Psoas muscle (tissue), 8 donors: ENCODE measurements at regions of chr7 and their contacts with region 1.

Region 1: DNA sequence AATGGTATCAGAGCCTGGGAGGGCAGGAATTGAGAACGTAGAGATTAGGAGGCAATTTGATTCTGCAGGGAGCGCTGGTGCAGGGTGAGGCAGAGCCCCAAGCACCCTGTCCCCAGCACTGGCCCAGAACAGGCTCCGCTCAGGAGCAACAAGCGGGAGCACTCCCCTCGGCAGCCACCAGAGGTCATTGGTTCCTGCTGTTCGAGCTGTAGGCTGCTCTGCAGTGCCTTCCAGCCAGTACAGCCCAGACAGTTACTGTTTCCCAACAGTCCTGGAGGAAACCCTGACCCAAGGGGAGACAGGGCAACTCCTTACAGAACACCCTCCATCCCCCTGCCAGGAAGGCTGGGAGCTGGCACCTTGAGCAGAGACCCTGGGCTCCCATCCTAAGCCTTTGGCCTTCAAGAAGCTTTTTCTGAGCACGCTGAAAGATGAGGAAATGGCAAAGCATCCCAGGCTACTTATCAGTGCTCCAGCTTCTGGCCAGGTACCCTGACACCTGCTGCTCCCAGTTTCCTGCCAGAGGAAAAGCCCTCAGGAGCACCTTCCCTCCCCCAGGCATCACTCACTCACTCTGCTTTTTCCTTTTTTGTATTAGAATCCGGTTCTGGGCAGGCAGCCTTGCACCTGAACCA is 71.2 kb upstream of the EFCAB10 start:
- DNase-seq: peak; percentile 77 to 89
- ATAC-seq: peak; percentile 91 to 95 (median 93)
- H3K4me3 ChIP-seq: no peak overlapping the region
- H3K27ac ChIP-seq: no peak overlapping the region
- H3K4me1 ChIP-seq: peaks cover 28% of the 10 kb centered on the region
- H3K27me3 ChIP-seq: no peaks in the 10 kb centered on the region
- CTCF ChIP-seq: peak; percentile 91

Region 2: DNA sequence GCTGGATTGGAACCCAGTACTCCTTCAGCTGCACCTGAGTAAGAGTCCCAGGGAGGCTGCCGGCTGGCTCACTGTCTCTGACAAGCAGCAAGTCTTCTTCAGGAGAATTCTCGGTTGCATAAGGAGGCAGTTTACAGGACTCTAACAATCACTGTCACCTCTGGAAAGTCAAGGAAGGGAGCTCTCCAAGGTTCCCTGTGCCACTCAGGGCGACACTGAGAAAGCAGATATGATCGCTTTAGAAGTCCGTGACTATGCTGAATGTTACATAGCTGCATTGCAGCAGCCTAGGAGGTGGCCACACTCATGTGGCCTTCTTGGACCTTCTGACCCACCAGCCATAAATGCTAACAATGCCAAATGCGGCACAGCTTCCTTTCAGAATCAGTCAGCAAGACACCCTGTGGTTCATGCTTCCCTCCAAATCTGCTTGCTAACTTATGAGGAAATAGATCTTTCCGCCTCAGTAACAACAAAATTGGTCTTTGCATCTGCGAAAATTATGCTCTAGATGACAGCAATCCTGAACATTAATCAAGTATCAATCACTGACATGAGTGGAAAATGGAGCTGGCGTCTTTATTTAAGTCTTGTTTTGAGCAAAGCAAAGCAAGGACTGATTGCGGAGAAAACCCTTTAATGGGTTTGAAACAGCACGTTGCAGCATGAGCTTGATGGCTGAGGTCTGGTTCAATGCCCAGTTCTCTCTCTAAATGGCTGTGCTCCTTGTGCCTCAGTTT is 91.0 kb after region 1 on chr7:
- intact Hi-C with region 1: loop called in 1 of 2 experiments (anchors 10 kb)
- DNase-seq: no peak
- ATAC-seq: no peak
- H3K4me3 ChIP-seq: no peak overlapping the region
- H3K27ac ChIP-seq: no peak overlapping the region
- H3K4me1 ChIP-seq: no peaks in the 10 kb centered on the region
- H3K27me3 ChIP-seq: no peaks in the 10 kb centered on the region
- CTCF ChIP-seq: no peak

Region 3: DNA sequence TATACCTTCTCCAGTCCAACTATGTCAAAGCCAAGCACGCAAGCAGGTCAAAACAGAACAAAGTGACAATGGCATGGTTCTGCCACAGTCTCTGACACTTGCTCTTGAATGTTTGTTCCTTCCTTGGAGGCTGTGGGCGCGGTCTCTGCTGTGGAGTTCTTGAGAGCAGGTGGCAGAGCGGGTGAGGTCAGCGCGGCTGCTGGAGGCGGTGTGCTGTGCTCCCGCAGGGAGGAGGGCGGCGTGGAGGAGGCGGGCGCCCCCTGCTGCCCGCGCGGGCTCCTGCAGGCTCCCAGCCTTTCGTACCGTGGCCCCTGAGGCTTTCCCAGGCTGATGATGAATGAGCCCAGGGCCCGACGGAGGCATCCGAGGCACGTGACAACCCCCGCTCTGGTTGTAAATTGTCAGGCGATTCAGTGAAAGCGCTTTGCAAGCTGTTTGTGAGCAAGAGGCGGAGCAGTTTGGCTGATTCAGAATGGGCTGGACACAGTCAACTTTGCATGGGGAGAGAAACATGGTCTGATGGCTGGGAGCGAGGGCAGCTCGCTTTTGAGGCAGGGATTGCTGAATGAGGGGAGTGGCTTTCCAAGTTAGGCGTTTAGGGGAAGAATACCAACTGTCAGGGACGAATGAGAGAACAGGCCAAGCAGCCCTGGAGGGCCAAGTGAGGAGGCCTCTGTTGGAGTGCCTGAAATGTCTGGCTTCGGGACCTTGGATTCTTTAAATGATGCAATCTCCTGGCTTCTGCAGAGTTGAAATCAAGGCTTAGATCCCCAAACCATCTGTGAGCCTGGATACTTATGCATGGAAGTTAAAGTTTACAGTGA is 357.1 kb after region 1 on chr7:
- intact Hi-C with region 1: loop called in 1 of 2 experiments (anchors 5 kb)
- DNase-seq: peak; percentile 82 to 90
- ATAC-seq: peak; percentile 97 to 99 (median 98)
- H3K4me3 ChIP-seq: no peak overlapping the region
- H3K27ac ChIP-seq: no peak overlapping the region
- H3K4me1 ChIP-seq: peaks cover 6% of the 10 kb centered on the region
- H3K27me3 ChIP-seq: no peaks in the 10 kb centered on the region
- CTCF ChIP-seq: peak; percentile 97

Region 4: DNA sequence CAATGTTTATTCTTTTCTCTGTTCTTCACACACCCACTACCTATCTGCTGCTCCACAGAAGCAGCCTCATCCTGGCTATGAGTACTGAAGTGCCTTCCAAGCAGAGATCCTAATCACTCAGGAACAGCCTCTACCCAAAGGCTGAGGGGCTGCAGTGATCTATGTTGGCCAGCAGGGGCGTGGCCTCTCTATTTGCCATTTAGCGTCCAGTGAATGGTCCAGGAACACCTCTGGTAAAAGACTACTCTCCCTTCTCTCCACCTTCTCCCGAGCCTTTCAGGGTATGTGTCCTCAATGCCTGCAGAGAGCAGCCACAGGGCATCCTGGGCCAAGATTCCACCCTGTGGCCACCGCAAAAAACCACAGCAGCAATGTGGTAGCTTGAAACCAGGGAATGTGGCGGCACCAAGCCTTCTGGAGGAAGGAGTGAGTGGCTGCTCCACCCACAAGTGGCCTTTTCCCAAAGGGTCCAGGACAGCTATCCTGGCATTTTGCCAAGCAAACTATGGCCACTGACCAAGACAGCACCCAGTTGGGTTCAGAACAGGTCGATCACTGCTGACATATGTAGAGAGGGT is 388.8 kb after region 1 on chr7:
- intact Hi-C with region 1: loop called (anchors 2 kb)
- DNase-seq: no peak
- ATAC-seq: peak in 3 of 4 donors; percentile 51 to 65 (median 61)
- H3K4me3 ChIP-seq: no peak overlapping the region
- H3K27ac ChIP-seq: no peak overlapping the region
- H3K4me1 ChIP-seq: peaks cover 10% of the 10 kb centered on the region
- H3K27me3 ChIP-seq: no peaks in the 10 kb centered on the region
- CTCF ChIP-seq: peak; percentile 62